Uterus (tissue), 4 donors: ENCODE measurements at regions of chr15 and their contacts with region 1.

Region 1: GRCh38 chr15:38389924-38390542 is 63.9 kb upstream of the FAM98B start:
- DNase-seq: peak; percentile 57 to 65
- H3K4me3 ChIP-seq: no peak overlapping the region
- H3K27ac ChIP-seq: no peak overlapping the region
- H3K4me1 ChIP-seq: no peaks in the 10 kb centered on the region
- H3K27me3 ChIP-seq: no peaks in the 10 kb centered on the region
- CTCF ChIP-seq: peak; percentile 62 to 76 (median 68)
- POLR2A ChIP-seq: no peak

Region 2: GRCh38 chr15:37995461-37996347 is 394.3 kb before region 1 on chr15:
- intact Hi-C with region 1: loop called (anchors 5 kb)
- DNase-seq: peak; percentile 50 to 51
- H3K4me3 ChIP-seq: no peak overlapping the region
- H3K27ac ChIP-seq: no peak overlapping the region
- H3K4me1 ChIP-seq: no peaks in the 10 kb centered on the region
- H3K27me3 ChIP-seq: no peaks in the 10 kb centered on the region
- CTCF ChIP-seq: peak; percentile 49 to 71 (median 66)
- POLR2A ChIP-seq: no peak